Naive thymus-derived CD4-positive, alpha-beta T cell (primary cell): ENCODE measurements at regions of chr6 and their contacts with region 1.

Region 1: GRCh38 chr6:138403801-138404661 is at the start of gene HEBP2:
- DNase-seq: peak; percentile 77 to 95 (median 90)
- ATAC-seq: peak; percentile 94
- H3K4me3 ChIP-seq: peak within 1 kb of the TSS; percentile 98
- H3K4me3 Mint-ChIP-seq: peak within 1 kb of the TSS; percentile 78 to 93 (median 86)
- H3K27ac ChIP-seq: peak within 1 kb of the TSS; percentile 76
- H3K27ac Mint-ChIP-seq: peak within 1 kb of the TSS; percentile 70 to 95 (median 89)
- H3K4me1 ChIP-seq: peaks cover 12 to 14% of the 10 kb centered on the region in 2 donors
- H3K4me1 Mint-ChIP-seq: peaks cover 6 to 43% (median 32%) of the 10 kb centered on the region in 7 donors
- H3K27me3 ChIP-seq: no peaks in the 10 kb centered on the region
- H3K27me3 Mint-ChIP-seq: peaks cover 0 to 22% (median 0%) of the 10 kb centered on the region in 5 donors
- total RNA-seq, gene HEBP2: 24.9 to 50.7 (median 48.2) TPM

Region 2: DNA sequence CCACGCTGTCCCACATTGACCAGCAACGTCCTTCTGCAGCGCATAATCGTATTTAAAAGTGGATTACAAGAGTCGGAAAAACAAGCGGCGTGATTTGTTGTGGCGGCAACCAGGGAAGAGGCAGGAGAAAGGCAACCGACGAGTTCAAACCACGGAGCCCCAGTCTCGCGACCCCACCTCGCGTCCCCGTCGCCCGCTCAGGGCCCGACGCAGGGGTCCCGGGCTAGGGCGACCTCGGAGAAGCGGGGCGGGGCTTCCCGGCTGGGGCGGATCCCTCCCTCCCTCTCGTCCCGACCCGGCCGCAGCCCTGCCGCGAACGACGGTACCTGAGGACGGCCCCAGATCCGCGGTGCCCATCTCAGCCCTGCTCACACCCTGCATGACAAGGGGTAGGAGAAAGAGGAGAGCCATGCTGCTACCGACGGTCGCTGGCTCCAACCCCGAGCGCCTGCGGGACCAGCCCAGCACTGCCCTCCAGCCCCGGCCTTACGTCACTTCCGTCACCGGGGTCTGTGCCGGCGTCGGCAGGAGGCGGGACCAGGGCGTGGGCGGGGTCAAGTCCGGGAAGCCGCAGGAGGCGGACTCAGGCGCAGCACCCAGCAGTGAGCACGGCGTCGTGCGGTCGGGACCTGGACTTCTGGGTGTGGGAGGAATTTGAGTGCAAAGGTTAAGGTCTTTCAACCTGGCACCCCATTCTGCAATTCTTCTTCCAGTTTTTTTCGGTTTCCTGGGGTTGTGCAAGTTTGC is 1184.9 kb before region 1 on chr6 and contains the start of gene IFNGR1:
- CTCF ChIA-PET with region 1: no interaction called
- POLR2A ChIA-PET with region 1: no interaction called
- intact Hi-C with region 1: loop called in 1 of 2 experiments (anchors 1 kb)
- DNase-seq: peak; percentile 89 to 97 (median 93)
- ATAC-seq: peak; percentile 92
- H3K4me3 ChIP-seq: peak within 1 kb of the TSS; percentile 88
- H3K4me3 Mint-ChIP-seq: peak within 1 kb of the TSS; percentile 85 to 100 (median 99)
- H3K27ac ChIP-seq: peak within 1 kb of the TSS; percentile 91
- H3K27ac Mint-ChIP-seq: peak within 1 kb of the TSS; percentile 91 to 100 (median 100)
- H3K4me1 ChIP-seq: peaks cover 20 to 43% of the 10 kb centered on the region in 2 donors
- H3K4me1 Mint-ChIP-seq: peaks cover 36 to 84% (median 69%) of the 10 kb centered on the region in 7 donors
- H3K27me3 ChIP-seq: no peaks in the 10 kb centered on the region
- H3K27me3 Mint-ChIP-seq: no peaks in the 10 kb centered on the region
- total RNA-seq, gene IFNGR1: 29.2 to 90.7 (median 31.3) TPM

Region 3: GRCh38 chr6:137970368-137970767 is 433.7 kb before region 1 on chr6:
- CTCF ChIA-PET with region 1: no interaction called
- POLR2A ChIA-PET with region 1: no interaction called
- intact Hi-C with region 1: no loop called
- DNase-seq: no peak
- ATAC-seq: no peak
- H3K4me3 ChIP-seq: no peak overlapping the region
- H3K4me3 Mint-ChIP-seq: no peak overlapping the region
- H3K27ac ChIP-seq: no peak overlapping the region
- H3K27ac Mint-ChIP-seq: peak overlapping the region in 1 of 9 donors; percentile 59
- H3K4me1 ChIP-seq: peaks cover 14 to 25% of the 10 kb centered on the region in 2 donors
- H3K4me1 Mint-ChIP-seq: peaks cover 28 to 62% (median 34%) of the 10 kb centered on the region in 7 donors
- H3K27me3 ChIP-seq: no peaks in the 10 kb centered on the region
- H3K27me3 Mint-ChIP-seq: no peaks in the 10 kb centered on the region

Region 4: GRCh38 chr6:138001750-138002349 is 402.2 kb before region 1 on chr6:
- CTCF ChIA-PET with region 1: no interaction called
- POLR2A ChIA-PET with region 1: no interaction called
- intact Hi-C with region 1: loop called in 1 of 2 experiments (anchors 10 kb)
- DNase-seq: peak in 8 of 9 donors; percentile 37 to 65 (median 56)
- ATAC-seq: peak; percentile 79
- H3K4me3 ChIP-seq: no peak overlapping the region
- H3K4me3 Mint-ChIP-seq: no peak overlapping the region
- H3K27ac ChIP-seq: no peak overlapping the region
- H3K27ac Mint-ChIP-seq: peak overlapping the region in 1 of 9 donors; percentile 27
- H3K4me1 ChIP-seq: no peaks in the 10 kb centered on the region
- H3K4me1 Mint-ChIP-seq: peaks cover 0 to 16% (median 5%) of the 10 kb centered on the region in 7 donors
- H3K27me3 ChIP-seq: no peaks in the 10 kb centered on the region
- H3K27me3 Mint-ChIP-seq: peaks cover 0 to 11% (median 0%) of the 10 kb centered on the region in 5 donors

Region 5: DNA sequence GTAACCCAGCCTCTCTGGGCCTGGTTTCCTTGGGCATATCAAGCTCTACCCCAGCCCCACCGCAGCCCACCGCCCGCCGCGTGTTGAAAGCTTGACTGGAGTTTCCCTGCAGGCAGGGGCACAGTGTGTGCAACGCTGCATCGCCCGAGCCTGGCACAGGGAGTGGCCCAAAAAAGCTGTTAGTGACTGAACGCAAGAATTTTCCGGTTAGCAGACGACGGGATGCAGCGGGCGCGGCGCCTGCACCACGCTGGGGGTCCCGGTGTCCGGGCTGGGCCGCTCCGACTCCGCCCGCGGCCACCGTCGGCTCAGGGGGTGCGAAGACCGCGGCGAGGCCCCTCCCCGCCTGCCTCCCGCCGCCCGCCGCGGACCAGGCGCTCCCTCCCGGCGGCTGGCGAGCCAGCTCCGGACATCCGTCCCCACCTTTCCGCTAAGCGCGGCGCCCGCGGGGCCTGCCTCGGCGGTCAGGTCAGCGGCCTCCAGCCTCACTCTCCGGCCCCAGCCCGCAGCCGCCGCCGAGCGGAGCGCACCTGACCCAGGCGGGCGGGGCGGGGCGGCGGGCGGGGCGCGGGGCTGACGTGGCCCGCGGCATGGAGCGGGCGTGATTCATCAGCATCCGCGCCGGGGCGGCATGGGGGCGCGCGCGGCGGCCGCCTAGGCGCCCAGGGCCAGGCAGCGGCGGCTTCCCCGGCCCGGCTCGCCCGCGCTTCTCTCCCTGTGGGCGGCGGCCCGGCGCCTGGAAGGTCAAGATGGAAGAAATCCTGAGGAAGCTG is 242.5 kb before region 1 on chr6 and contains the start of gene ARFGEF3:
- CTCF ChIA-PET with region 1: no interaction called
- POLR2A ChIA-PET with region 1: no interaction called
- intact Hi-C with region 1: loop called in 1 of 2 experiments (anchors 1 kb)
- DNase-seq: peak in 5 of 9 donors; percentile 4 to 72 (median 25)
- ATAC-seq: peak; percentile 87
- H3K4me3 ChIP-seq: peak within 1 kb of the TSS; percentile 39
- H3K4me3 Mint-ChIP-seq: peak within 1 kb of the TSS; percentile 62 to 78 (median 74)
- H3K27ac ChIP-seq: no peak within 1 kb of the TSS
- H3K27ac Mint-ChIP-seq: peak within 1 kb of the TSS in 1 of 9 donors; percentile 3
- H3K4me1 ChIP-seq: peaks cover 0 to 3% of the 10 kb centered on the region in 2 donors
- H3K4me1 Mint-ChIP-seq: peaks cover 2 to 16% (median 8%) of the 10 kb centered on the region in 7 donors
- H3K27me3 ChIP-seq: peaks cover 7 to 16% of the 10 kb centered on the region in 2 donors
- H3K27me3 Mint-ChIP-seq: peaks cover 59 to 68% (median 65%) of the 10 kb centered on the region in 5 donors
- total RNA-seq, gene ARFGEF3: 0.02 to 0.15 (median 0.03) TPM in 3 of 5 experiments, not detected in the others

Region 6: DNA sequence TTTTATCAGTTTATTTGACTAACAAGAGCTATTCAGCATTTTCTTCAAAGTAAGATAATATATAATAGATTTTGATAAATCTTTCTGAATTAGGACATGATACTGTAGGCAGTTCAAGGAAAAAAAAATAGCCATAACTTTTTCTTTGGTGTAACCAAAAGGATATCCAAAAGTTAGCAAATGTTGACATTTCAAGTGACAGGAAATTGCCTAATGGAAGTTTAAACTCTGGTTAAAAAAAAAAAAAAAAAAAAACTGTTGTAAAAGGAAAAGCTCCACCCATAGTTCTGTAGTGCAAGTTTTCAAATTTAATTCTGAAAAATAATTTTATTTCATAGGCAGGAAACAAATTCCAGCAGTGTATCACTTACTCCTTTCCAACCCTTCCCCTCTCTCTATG is 18.8 kb after region 1 on chr6:
- CTCF ChIA-PET with region 1: interaction called, 3 read pairs
- POLR2A ChIA-PET with region 1: interaction called, 5 read pairs
- intact Hi-C with region 1: loop called in 1 of 2 experiments (anchors 2 kb)
- DNase-seq: no peak
- ATAC-seq: no peak
- H3K4me3 ChIP-seq: no peak overlapping the region
- H3K4me3 Mint-ChIP-seq: no peak overlapping the region
- H3K27ac ChIP-seq: no peak overlapping the region
- H3K27ac Mint-ChIP-seq: no peak overlapping the region
- H3K4me1 ChIP-seq: no peaks in the 10 kb centered on the region
- H3K4me1 Mint-ChIP-seq: peaks cover 6 to 17% (median 9%) of the 10 kb centered on the region in 7 donors
- H3K27me3 ChIP-seq: no peaks in the 10 kb centered on the region
- H3K27me3 Mint-ChIP-seq: peaks cover 0 to 2% (median 0%) of the 10 kb centered on the region in 5 donors

Region 7: GRCh38 chr6:138526822-138527235 is 122.8 kb after region 1 on chr6:
- CTCF ChIA-PET with region 1: no interaction called
- POLR2A ChIA-PET with region 1: no interaction called
- intact Hi-C with region 1: no loop called
- DNase-seq: no peak
- ATAC-seq: no peak
- H3K4me3 ChIP-seq: no peak overlapping the region
- H3K4me3 Mint-ChIP-seq: no peak overlapping the region
- H3K27ac ChIP-seq: no peak overlapping the region
- H3K27ac Mint-ChIP-seq: no peak overlapping the region
- H3K4me1 ChIP-seq: no peaks in the 10 kb centered on the region
- H3K4me1 Mint-ChIP-seq: peaks cover 0 to 3% (median 2%) of the 10 kb centered on the region in 7 donors
- H3K27me3 ChIP-seq: no peaks in the 10 kb centered on the region
- H3K27me3 Mint-ChIP-seq: peaks cover 6 to 28% (median 10%) of the 10 kb centered on the region in 5 donors

Region 8: GRCh38 chr6:138588805-138589434 is 184.9 kb after region 1 on chr6:
- CTCF ChIA-PET with region 1: no interaction called
- POLR2A ChIA-PET with region 1: no interaction called
- intact Hi-C with region 1: loop called in 1 of 2 experiments (anchors 1 kb)
- DNase-seq: peak in 8 of 9 donors; percentile 14 to 60 (median 46)
- ATAC-seq: peak; percentile 69
- H3K4me3 ChIP-seq: no peak overlapping the region
- H3K4me3 Mint-ChIP-seq: no peak overlapping the region
- H3K27ac ChIP-seq: no peak overlapping the region
- H3K27ac Mint-ChIP-seq: no peak overlapping the region
- H3K4me1 ChIP-seq: peaks cover 0 to 11% of the 10 kb centered on the region in 2 donors
- H3K4me1 Mint-ChIP-seq: peaks cover 12 to 29% (median 17%) of the 10 kb centered on the region in 7 donors
- H3K27me3 ChIP-seq: no peaks in the 10 kb centered on the region
- H3K27me3 Mint-ChIP-seq: peaks cover 0 to 3% (median 0%) of the 10 kb centered on the region in 5 donors